ENCODE measurements at regions of chr16 and their contacts with region 1.

Region 1: DNA sequence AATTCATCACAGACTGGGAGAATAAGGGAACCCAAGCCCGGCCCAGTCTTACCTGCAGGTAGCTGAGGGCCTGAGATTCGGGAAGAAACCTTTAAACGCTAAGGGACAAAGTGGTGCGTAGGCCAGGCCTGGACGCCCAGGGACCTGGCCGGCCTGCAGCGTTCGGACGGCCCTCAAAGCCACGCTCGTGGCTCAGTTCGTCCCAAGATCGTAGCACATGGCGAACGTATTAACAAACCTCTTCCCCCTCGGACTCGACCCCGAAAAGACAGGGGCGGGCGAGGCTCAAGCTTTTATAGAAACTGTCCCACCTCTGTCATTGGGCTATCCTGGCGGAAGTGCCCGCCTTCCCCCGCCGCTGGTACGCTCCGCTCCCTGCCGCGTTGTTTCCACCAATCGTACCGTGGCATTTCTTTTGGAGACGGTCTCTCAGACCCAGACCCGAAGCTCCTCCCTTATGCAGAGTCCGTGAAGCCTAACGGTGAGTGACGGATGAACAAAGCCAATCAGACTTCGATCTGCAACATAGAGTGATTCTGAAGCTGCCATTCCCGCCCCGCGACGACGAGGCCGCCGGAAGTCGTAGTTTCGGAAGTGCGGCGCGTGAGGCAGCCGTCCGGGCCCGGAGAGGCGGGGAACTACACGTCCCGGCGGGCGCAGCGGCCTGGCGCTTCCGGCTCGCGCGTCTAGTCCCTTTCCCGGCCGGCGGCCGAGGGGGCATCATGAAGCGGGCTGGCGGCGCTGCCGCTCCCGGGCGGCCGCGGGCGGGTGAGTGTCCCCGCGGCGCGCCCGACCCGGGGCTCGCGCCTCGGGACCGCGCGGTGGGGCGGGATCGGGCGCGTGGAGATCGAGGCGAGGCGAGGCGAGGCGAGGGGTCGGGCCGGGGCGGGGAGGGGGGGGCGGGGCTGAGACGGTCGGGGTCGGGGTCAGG is at the start of gene TRAF7:
- DNase-seq: peak; percentile 91
- ATAC-seq: peak; percentile 92
- H3K4me3 Mint-ChIP-seq: peak within 1 kb of the TSS; percentile 95
- H3K27ac Mint-ChIP-seq: peak within 1 kb of the TSS; percentile 83
- H3K4me1 Mint-ChIP-seq: peaks cover 77% of the 10 kb centered on the region
- H3K27me3 Mint-ChIP-seq: no peaks in the 10 kb centered on the region
- CTCF ChIP-seq: no peak
- total RNA-seq, gene TRAF7: 72.7 and 78.1 TPM in 2 replicates

Region 2: GRCh38 chr16:1959269-1960049 is 195.9 kb before region 1 on chr16 and contains the start of gene NDUFB10:
- CTCF ChIA-PET with region 1: no interaction called
- POLR2A ChIA-PET with region 1: interaction called, 36 read pairs
- intact Hi-C with region 1: no loop called
- DNase-seq: peak; percentile 96
- ATAC-seq: peak; percentile 86
- H3K4me3 Mint-ChIP-seq: peak within 1 kb of the TSS; percentile 91
- H3K27ac Mint-ChIP-seq: peak within 1 kb of the TSS; percentile 86
- H3K4me1 Mint-ChIP-seq: peaks cover 49% of the 10 kb centered on the region
- H3K27me3 Mint-ChIP-seq: no peaks in the 10 kb centered on the region
- CTCF ChIP-seq: no peak
- total RNA-seq, gene NDUFB10: 77.4 and 92.5 TPM in 2 replicates

Region 3: GRCh38 chr16:1991948-1992703 is 163.2 kb before region 1 on chr16:
- CTCF ChIA-PET with region 1: no interaction called
- POLR2A ChIA-PET with region 1: interaction called, 55 read pairs
- intact Hi-C with region 1: no loop called
- DNase-seq: peak; percentile 95
- ATAC-seq: peak; percentile 79
- H3K4me3 Mint-ChIP-seq: peak overlapping the region; percentile 82
- H3K27ac Mint-ChIP-seq: peak overlapping the region; percentile 88
- H3K4me1 Mint-ChIP-seq: peaks cover 29% of the 10 kb centered on the region
- H3K27me3 Mint-ChIP-seq: no peaks in the 10 kb centered on the region
- CTCF ChIP-seq: no peak

Region 4: GRCh38 chr16:2047330-2048115 is 107.8 kb before region 1 on chr16 and contains the starts of genes NTHL1 and TSC2:
- CTCF ChIA-PET with region 1: no interaction called
- POLR2A ChIA-PET with region 1: interaction called, 30 read pairs
- intact Hi-C with region 1: no loop called
- DNase-seq: peak; percentile 93
- ATAC-seq: peak; percentile 95
- H3K4me3 Mint-ChIP-seq: peak within 1 kb of the TSS; percentile 89
- H3K27ac Mint-ChIP-seq: peak within 1 kb of the TSS; percentile 66
- H3K4me1 Mint-ChIP-seq: peaks cover 24% of the 10 kb centered on the region
- H3K27me3 Mint-ChIP-seq: no peaks in the 10 kb centered on the region
- CTCF ChIP-seq: no peak
- total RNA-seq, gene NTHL1: 10.5 and 11.5 TPM in 2 replicates
- total RNA-seq, gene TSC2: 130 and 139 TPM in 2 replicates

Region 5: DNA sequence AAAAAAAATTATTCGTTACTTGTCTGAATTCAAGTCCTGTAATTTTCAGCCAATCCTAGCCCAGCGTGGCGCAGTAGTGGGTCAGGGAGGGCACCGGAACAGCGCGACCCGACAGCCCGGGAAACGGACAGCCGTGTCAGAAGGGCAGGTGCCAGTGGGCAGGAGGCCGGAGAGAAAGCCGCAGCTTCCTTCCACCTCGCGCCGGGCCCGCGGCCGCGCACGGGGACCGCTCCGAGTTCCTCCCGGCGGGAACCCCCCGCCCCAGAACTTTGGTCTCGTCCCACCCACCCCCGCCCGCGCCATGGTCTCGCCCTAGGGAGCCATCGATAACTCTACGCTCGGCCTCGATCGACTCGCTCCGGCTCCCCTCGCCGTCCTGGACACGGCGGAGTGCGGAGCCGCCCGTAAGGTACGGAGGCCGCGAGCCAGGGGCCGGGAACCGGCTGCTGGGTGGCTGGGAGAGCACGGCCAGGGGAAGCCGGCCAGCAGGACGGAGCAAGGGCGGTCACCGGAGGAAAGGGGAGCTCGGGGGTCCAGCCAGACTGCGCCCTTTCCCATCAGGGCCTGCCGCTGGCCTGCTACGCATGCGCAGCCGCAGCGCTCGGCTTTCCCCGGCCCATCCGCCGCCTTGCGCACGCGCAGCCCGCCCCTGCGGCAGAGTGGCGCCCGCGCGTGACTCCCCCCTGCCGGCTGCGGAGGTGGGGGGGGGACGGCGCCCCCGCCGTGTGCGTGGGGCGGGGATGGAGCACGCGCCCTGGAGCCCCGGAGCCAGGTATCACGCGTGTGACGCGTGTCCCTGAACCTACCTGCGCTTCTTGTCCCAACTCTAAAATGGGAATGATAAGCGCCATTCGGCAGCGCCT is 50.0 kb after region 1 on chr16 and contains the start of gene MLST8:
- CTCF ChIA-PET with region 1: no interaction called
- POLR2A ChIA-PET with region 1: interaction called, 62 read pairs
- intact Hi-C with region 1: no loop called
- DNase-seq: peak; percentile 99
- ATAC-seq: peak; percentile 90
- H3K4me3 Mint-ChIP-seq: peak within 1 kb of the TSS; percentile 84
- H3K27ac Mint-ChIP-seq: peak within 1 kb of the TSS; percentile 86
- H3K4me1 Mint-ChIP-seq: peaks cover 19% of the 10 kb centered on the region
- H3K27me3 Mint-ChIP-seq: no peaks in the 10 kb centered on the region
- CTCF ChIP-seq: no peak
- total RNA-seq, gene MLST8: 35.7 and 38.7 TPM in 2 replicates

Region 6: GRCh38 chr16:2267913-2268666 is 112.7 kb after region 1 on chr16 and contains the start of gene RNPS1:
- CTCF ChIA-PET with region 1: no interaction called
- POLR2A ChIA-PET with region 1: interaction called, 14 read pairs
- intact Hi-C with region 1: no loop called
- DNase-seq: peak; percentile 98
- ATAC-seq: peak; percentile 91
- H3K4me3 Mint-ChIP-seq: peak within 1 kb of the TSS; percentile 93
- H3K27ac Mint-ChIP-seq: peak within 1 kb of the TSS; percentile 98
- H3K4me1 Mint-ChIP-seq: peaks cover 43% of the 10 kb centered on the region
- H3K27me3 Mint-ChIP-seq: no peaks in the 10 kb centered on the region
- CTCF ChIP-seq: no peak
- total RNA-seq, gene RNPS1: 228 and 232 TPM in 2 replicates

Region 7: DNA sequence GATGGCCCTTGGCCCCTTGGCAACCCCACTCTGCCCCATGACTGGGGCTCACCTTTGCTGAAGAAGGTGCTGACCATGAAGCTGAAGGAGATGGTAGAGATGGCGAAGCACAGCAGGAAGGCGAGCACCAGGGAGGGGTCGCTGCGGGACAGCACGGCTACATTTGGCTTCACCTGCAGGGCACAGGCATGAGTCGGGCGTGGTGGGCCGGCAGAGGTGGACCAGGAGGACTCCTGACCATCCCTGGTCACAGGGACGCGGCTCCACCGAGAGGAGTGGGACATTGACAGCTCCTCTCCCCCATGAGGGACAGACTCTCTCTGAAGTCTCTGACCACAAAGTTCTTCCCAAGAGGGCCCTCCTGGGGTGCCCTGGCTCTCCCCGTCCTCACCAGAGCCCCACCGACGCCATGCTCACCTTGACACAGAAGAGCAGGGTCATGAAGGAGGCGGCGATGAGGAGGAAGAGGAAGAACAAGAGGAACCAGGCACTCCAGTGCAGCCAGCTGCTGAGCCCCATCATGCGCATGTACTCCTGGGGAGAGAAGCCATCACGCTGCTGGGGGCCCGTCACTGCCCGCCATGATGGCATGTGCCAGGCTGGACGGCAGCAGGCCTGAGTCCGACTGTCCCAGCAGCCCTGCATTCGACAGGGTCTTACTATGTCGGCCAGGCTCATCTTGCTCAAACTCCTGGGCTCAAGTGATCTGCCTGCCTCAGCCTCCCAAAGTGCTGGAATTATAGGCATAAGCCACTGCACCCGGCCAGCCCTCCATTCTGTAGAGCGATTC is 162.1 kb after region 1 on chr16:
- CTCF ChIA-PET with region 1: no interaction called
- POLR2A ChIA-PET with region 1: no interaction called
- intact Hi-C with region 1: no loop called
- DNase-seq: no peak
- ATAC-seq: no peak
- H3K4me3 Mint-ChIP-seq: no peak overlapping the region
- H3K27ac Mint-ChIP-seq: no peak overlapping the region
- H3K4me1 Mint-ChIP-seq: no peaks in the 10 kb centered on the region
- H3K27me3 Mint-ChIP-seq: no peaks in the 10 kb centered on the region
- CTCF ChIP-seq: no peak

Region 8: GRCh38 chr16:2513405-2514322 is 358.3 kb after region 1 on chr16 and contains the start of gene ATP6V0C:
- CTCF ChIA-PET with region 1: no interaction called
- POLR2A ChIA-PET with region 1: interaction called, 16 read pairs
- intact Hi-C with region 1: no loop called
- DNase-seq: peak; percentile 95
- ATAC-seq: peak; percentile 78
- H3K4me3 Mint-ChIP-seq: peak within 1 kb of the TSS; percentile 94
- H3K27ac Mint-ChIP-seq: peak within 1 kb of the TSS; percentile 92
- H3K4me1 Mint-ChIP-seq: peaks cover 85% of the 10 kb centered on the region
- H3K27me3 Mint-ChIP-seq: no peaks in the 10 kb centered on the region
- CTCF ChIP-seq: no peak
- total RNA-seq, gene ATP6V0C: 74.9 and 91.4 TPM in 2 replicates